ENCODE measurements at regions of chr20 and their contacts with region 1.

Region 1: GRCh38 chr20:38748097-38748860 is at the start of gene ACTR5:
- DNase-seq: peak; percentile 98
- ATAC-seq: peak; percentile 92
- H3K4me3 Mint-ChIP-seq: peak within 1 kb of the TSS; percentile 91
- H3K27ac Mint-ChIP-seq: peak within 1 kb of the TSS; percentile 98
- H3K4me1 Mint-ChIP-seq: peaks cover 22% of the 10 kb centered on the region
- H3K27me3 Mint-ChIP-seq: no peaks in the 10 kb centered on the region
- total RNA-seq, gene ACTR5: 6.3 to 8.4 TPM

Region 2: GRCh38 chr20:38446441-38447209 is 301.7 kb before region 1 on chr20:
- CTCF ChIA-PET with region 1: no interaction called
- POLR2A ChIA-PET with region 1: no interaction called
- intact Hi-C with region 1: loop called in 1 of 2 experiments (anchors 5 kb)
- DNase-seq: peak; percentile 97
- ATAC-seq: peak; percentile 96
- H3K4me3 Mint-ChIP-seq: peak overlapping the region; percentile 68
- H3K27ac Mint-ChIP-seq: peak overlapping the region; percentile 63
- H3K4me1 Mint-ChIP-seq: peaks cover 29% of the 10 kb centered on the region
- H3K27me3 Mint-ChIP-seq: peaks cover 3% of the 10 kb centered on the region

Region 3: GRCh38 chr20:38645980-38646858 is 102.1 kb before region 1 on chr20:
- CTCF ChIA-PET with region 1: interaction called, 15 read pairs
- POLR2A ChIA-PET with region 1: no interaction called
- intact Hi-C with region 1: loop called (anchors 1 kb)
- DNase-seq: peak; percentile 93
- ATAC-seq: peak; percentile 98
- H3K4me3 Mint-ChIP-seq: peak overlapping the region; percentile 44
- H3K27ac Mint-ChIP-seq: peak overlapping the region; percentile 41
- H3K4me1 Mint-ChIP-seq: peaks cover 7% of the 10 kb centered on the region
- H3K27me3 Mint-ChIP-seq: peaks cover 30% of the 10 kb centered on the region

Region 4: GRCh38 chr20:38764567-38765355 is 16.5 kb after region 1 on chr20:
- CTCF ChIA-PET with region 1: interaction called, 51 read pairs
- POLR2A ChIA-PET with region 1: no interaction called
- intact Hi-C with region 1: no loop called
- DNase-seq: peak; percentile 82
- ATAC-seq: peak; percentile 100
- H3K4me3 Mint-ChIP-seq: no peak overlapping the region
- H3K27ac Mint-ChIP-seq: peak overlapping the region; percentile 79
- H3K4me1 Mint-ChIP-seq: peaks cover 22% of the 10 kb centered on the region
- H3K27me3 Mint-ChIP-seq: no peaks in the 10 kb centered on the region

Region 5: DNA sequence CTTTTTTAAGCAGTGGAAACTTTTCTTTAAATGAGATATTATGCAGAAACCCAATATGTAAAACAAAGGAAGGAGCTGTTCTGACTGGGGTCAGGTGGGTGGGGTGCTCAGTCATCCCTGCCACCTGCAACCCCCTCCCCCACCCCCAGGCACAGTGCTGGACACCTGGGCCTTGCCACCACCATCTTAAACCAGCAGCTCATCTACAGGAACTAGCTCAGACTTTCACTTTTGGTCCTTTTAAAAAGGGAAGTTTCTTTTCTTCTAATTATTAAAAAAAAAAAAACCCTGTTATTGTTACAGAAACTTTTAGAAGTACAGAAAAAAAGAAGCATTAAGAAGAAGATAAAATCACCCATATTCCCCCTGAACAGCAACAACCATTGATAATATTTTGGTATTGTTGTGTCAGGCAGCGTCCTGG is 94.3 kb after region 1 on chr20:
- CTCF ChIA-PET with region 1: no interaction called
- POLR2A ChIA-PET with region 1: interaction called, 4 read pairs
- intact Hi-C with region 1: loop called in 1 of 2 experiments (anchors 1 kb)
- DNase-seq: peak; percentile 87
- ATAC-seq: peak; percentile 66
- H3K4me3 Mint-ChIP-seq: peak overlapping the region; percentile 71
- H3K27ac Mint-ChIP-seq: peak overlapping the region; percentile 97
- H3K4me1 Mint-ChIP-seq: peaks cover 87% of the 10 kb centered on the region
- H3K27me3 Mint-ChIP-seq: no peaks in the 10 kb centered on the region

Region 6: GRCh38 chr20:38926142-38926933 is 178.1 kb after region 1 on chr20 and contains the start of gene FAM83D:
- CTCF ChIA-PET with region 1: interaction called, 3 read pairs
- POLR2A ChIA-PET with region 1: no interaction called
- intact Hi-C with region 1: loop called in 1 of 2 experiments (anchors 1 kb)
- DNase-seq: peak; percentile 99
- ATAC-seq: peak; percentile 98
- H3K4me3 Mint-ChIP-seq: peak within 1 kb of the TSS; percentile 81
- H3K27ac Mint-ChIP-seq: peak within 1 kb of the TSS; percentile 19
- H3K4me1 Mint-ChIP-seq: peaks cover 21% of the 10 kb centered on the region
- H3K27me3 Mint-ChIP-seq: no peaks in the 10 kb centered on the region
- total RNA-seq, gene FAM83D: 10.5 to 12.4 TPM